GM12878 (cell line): ENCODE measurements at regions of chr15 and their contacts with region 1.

Region 1: GRCh38 chr15:52005748-52006701 is 13.0 kb upstream of the MAPK6 start:
- DNase-seq: peak; percentile 97
- ATAC-seq: peak; percentile 81
- H3K4me3 ChIP-seq: no peak overlapping the region; the same call in 1 of the 2 replicates
- H3K27ac ChIP-seq: peak overlapping the region; percentile 99
- H3K4me1 ChIP-seq: peaks cover 56% of the 10 kb centered on the region
- H3K27me3 ChIP-seq: no peaks in the 10 kb centered on the region
- CTCF ChIP-seq: no peak
- EP300 ChIP-seq: peak; percentile 50 to 73; a peak in 2 of 4 replicates
- POLR2A ChIP-seq: no peak
- RAD21 ChIP-seq: no peak

Region 2: GRCh38 chr15:51737280-51738017 is 268.6 kb before region 1 on chr15 and contains the start of gene LYSMD2:
- CTCF ChIA-PET with region 1: no interaction called
- POLR2A ChIA-PET with region 1: no interaction called
- RAD21 ChIA-PET with region 1: interaction called, 5 read pairs
- SMC1A ChIA-PET with region 1: interaction called, 7 read pairs
- in situ Hi-C with region 1: no loop called
- intact Hi-C with region 1: loop called (anchors 5 kb)
- DNase-seq: no peak
- ATAC-seq: peak; percentile 46
- H3K4me3 ChIP-seq: peak within 1 kb of the TSS; percentile 77
- H3K27ac ChIP-seq: peak within 1 kb of the TSS; percentile 94
- H3K4me1 ChIP-seq: peaks cover 25% of the 10 kb centered on the region
- H3K27me3 ChIP-seq: no peaks in the 10 kb centered on the region
- CTCF ChIP-seq: no peak
- EP300 ChIP-seq: no peak; a peak in 1 of 4 replicates
- POLR2A ChIP-seq: peak; percentile 63
- RAD21 ChIP-seq: no peak
- polyA plus RNA-seq, gene LYSMD2: 30.5 to 61.3 TPM

Region 3: DNA sequence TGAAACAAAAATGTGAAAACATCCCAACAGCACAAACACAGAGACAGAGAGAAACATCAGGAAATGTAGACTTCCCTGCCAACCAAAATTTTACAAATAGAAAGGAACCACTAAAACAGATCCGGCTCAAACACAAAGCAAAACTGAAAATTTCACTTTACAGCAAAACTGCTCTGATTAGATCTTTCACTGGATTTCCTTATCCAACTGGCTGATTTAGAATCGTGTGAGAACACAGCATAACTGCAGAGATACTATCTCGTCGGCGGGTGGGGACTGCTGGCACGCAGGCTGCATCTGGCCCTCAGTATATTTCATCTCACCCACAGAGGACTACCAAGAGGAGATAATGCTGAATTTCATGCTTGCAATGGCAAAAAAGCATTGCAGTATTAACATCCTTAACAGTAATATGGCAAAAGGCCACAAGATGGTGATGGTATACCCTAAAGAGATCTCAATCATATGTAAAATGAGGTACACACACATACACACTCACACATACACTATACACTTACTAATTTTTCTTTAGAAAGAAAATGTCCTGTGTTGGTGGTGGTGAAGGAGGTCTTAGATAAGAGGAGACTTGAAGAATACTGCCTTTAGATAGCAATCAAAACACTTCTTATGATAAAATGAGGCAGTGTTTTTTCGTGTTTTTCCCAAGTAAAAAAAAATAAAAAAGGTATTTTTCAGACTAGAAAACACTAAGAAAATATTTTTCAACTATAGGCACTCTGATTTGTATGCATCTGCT is 23.8 kb before region 1 on chr15:
- CTCF ChIA-PET with region 1: interaction called, 6 read pairs
- POLR2A ChIA-PET with region 1: no interaction called
- RAD21 ChIA-PET with region 1: interaction called, 6 read pairs
- SMC1A ChIA-PET with region 1: interaction called, 16 read pairs
- in situ Hi-C with region 1: no loop called
- intact Hi-C with region 1: loop called (anchors 2 kb)
- DNase-seq: peak; percentile 92
- ATAC-seq: peak; percentile 99
- H3K4me3 ChIP-seq: peak overlapping the region; percentile 61
- H3K27ac ChIP-seq: peak overlapping the region; percentile 73
- H3K4me1 ChIP-seq: no peaks in the 10 kb centered on the region
- H3K27me3 ChIP-seq: no peaks in the 10 kb centered on the region
- CTCF ChIP-seq: peak; percentile 60 to 88 (median 80)
- EP300 ChIP-seq: no peak
- POLR2A ChIP-seq: peak; percentile 69
- RAD21 ChIP-seq: peak; percentile 96

Region 4: DNA sequence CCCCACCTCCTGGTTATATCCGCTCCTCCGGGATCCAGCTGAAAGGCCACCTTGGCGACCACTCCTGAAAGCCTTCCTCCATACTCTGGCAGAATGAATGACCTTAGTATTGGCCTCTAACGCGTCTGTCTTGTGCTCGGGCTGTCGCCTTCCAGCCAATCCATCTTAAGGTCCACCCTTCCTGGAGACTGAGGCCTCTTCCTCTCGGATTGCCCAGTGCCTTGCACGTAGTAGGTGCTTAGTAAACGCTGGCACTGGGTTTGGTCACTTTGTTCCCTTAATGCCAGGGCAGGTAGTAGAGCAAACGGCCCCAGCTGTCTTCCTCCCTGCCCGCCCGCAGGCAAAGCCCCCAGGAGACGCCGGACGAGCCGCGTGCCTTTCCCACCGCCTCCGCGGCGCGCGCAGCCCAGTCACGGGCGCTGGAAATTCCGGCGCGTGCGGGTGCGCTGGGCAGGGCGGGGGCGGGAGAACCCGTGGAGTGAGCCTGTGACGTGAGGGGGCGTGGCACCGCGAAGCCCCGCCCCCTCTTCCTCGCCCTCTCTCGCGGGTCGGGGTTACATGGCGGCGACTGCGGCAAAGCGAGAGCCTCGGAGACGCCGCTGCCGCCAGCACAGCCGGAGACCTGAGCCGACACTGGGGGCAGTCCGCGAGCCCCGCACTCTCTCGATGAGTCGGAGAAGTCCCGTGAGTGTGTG is 12.8 kb after region 1 on chr15 and contains the start of gene MAPK6:
- CTCF ChIA-PET with region 1: interaction called, 5 read pairs
- POLR2A ChIA-PET with region 1: interaction called, 54 read pairs
- RAD21 ChIA-PET with region 1: interaction called, 54 read pairs
- SMC1A ChIA-PET with region 1: interaction called, 52 read pairs
- in situ Hi-C with region 1: no loop called
- intact Hi-C with region 1: loop called (anchors 1 kb)
- DNase-seq: peak; percentile 71
- ATAC-seq: peak; percentile 69
- H3K4me3 ChIP-seq: peak within 1 kb of the TSS; percentile 91
- H3K27ac ChIP-seq: peak within 1 kb of the TSS; percentile 99
- H3K4me1 ChIP-seq: peaks cover 15% of the 10 kb centered on the region
- H3K27me3 ChIP-seq: no peaks in the 10 kb centered on the region
- CTCF ChIP-seq: no peak
- EP300 ChIP-seq: peak in 1 of 2 experiments; percentile 61; a peak in 1 of 4 replicates
- POLR2A ChIP-seq: peak; percentile 88
- RAD21 ChIP-seq: no peak
- polyA plus RNA-seq, gene MAPK6: 20.6 to 23.4 TPM

Region 5: DNA sequence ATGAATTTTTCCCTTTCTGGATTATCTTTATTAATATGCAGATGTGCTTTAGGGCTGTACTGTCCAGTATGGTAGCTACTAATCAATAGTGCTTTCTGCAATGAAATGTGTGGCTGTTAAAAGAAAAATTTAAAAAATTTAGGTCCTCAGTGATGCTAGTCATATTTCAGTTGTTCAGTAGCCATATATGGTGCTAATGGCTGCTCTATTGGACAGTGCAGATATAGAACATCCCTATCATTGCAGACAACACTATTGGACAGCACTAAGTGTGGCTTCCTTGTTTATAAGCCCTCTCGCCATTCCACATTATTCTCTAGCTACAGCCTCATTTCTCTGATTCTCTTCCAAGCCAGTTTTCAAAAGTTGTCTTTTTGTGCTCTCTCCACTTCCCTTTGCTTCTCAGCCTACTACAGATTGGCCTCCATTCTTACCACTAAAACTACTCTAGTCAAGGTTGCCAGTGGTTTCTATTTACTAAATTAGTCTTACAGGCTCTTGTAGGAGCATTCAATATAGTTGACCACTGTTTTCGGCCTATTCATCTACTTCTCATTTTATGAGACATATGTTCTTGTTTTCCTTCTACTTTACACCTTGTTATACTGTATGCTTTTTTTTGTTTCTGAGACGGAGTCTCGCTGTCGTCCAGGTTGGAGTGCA is 22.5 kb after region 1 on chr15:
- CTCF ChIA-PET with region 1: interaction called, 4 read pairs
- POLR2A ChIA-PET with region 1: interaction called, 6 read pairs
- RAD21 ChIA-PET with region 1: interaction called, 54 read pairs
- SMC1A ChIA-PET with region 1: interaction called, 10 read pairs
- in situ Hi-C with region 1: no loop called
- intact Hi-C with region 1: no loop called
- DNase-seq: no peak
- ATAC-seq: peak; percentile 87
- H3K4me3 ChIP-seq: no peak overlapping the region
- H3K27ac ChIP-seq: peak overlapping the region; percentile 9; the same call in 1 of the 2 replicates
- H3K4me1 ChIP-seq: peaks cover 11% of the 10 kb centered on the region
- H3K27me3 ChIP-seq: no peaks in the 10 kb centered on the region
- CTCF ChIP-seq: no peak
- EP300 ChIP-seq: no peak
- POLR2A ChIP-seq: no peak
- RAD21 ChIP-seq: no peak

Region 6: GRCh38 chr15:52103217-52104207 is 97.5 kb after region 1 on chr15:
- CTCF ChIA-PET with region 1: interaction called, 11 read pairs
- POLR2A ChIA-PET with region 1: interaction called, 23 read pairs
- RAD21 ChIA-PET with region 1: interaction called, 37 read pairs
- SMC1A ChIA-PET with region 1: interaction called, 68 read pairs
- in situ Hi-C with region 1: no loop called
- intact Hi-C with region 1: loop called (anchors 2 kb)
- DNase-seq: peak; percentile 94
- ATAC-seq: peak; percentile 76
- H3K4me3 ChIP-seq: no peak overlapping the region
- H3K27ac ChIP-seq: no peak overlapping the region
- H3K4me1 ChIP-seq: peaks cover 33% of the 10 kb centered on the region
- H3K27me3 ChIP-seq: no peaks in the 10 kb centered on the region
- CTCF ChIP-seq: no peak
- EP300 ChIP-seq: peak; percentile 59 to 76; a peak in 3 of 4 replicates
- POLR2A ChIP-seq: 0 out of 2 replicates have a peak, but pooled peaks have one; percentile 12
- RAD21 ChIP-seq: peak; percentile 31; the same call in 1 of the 2 replicates

Region 7: DNA sequence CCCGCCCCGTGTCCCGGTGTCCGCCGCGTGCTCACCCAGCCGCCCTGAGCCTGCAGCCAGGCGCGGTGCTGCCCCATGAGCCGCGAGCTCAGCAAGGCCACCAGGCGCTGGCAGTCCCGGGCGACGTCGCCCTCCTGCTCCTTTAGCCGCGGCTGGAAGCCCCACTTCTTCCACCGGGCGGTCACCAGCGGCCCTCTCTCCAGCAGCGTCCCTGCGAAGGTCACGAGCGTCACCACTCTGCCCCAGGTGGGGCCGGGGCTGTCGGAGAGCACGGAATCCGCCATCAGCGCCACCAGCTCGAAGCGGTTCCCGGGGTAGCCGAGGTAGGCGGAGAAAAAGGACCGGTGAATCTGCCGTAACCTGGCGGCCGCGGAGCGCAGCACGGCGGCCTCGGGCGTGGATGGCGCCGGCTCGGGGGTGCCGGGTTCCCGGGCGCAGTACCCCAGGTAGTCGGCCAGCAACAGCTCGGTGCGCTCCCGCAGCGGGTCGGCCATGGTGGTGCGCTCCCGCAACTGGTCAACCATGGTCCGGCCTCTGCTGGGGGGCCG is 106.3 kb after region 1 on chr15:
- CTCF ChIA-PET with region 1: interaction called, 4 read pairs
- POLR2A ChIA-PET with region 1: interaction called, 18 read pairs
- RAD21 ChIA-PET with region 1: interaction called, 37 read pairs
- SMC1A ChIA-PET with region 1: interaction called, 31 read pairs
- in situ Hi-C with region 1: no loop called
- intact Hi-C with region 1: no loop called
- DNase-seq: no peak
- ATAC-seq: peak; percentile 15
- H3K4me3 ChIP-seq: peak overlapping the region; percentile 72; the same call in 1 of the 2 replicates
- H3K27ac ChIP-seq: peak overlapping the region; percentile 94
- H3K4me1 ChIP-seq: peaks cover 42% of the 10 kb centered on the region
- H3K27me3 ChIP-seq: no peaks in the 10 kb centered on the region
- CTCF ChIP-seq: peak in 1 of 3 experiments; percentile 15; a peak in 1 of 6 replicates
- EP300 ChIP-seq: no peak
- POLR2A ChIP-seq: peak; percentile 79
- RAD21 ChIP-seq: no peak